T-cell (primary cell): ENCODE measurements at regions of chr17 and their contacts with region 1.

Region 1: GRCh38 chr17:77235370-77235941 is 94.7 kb downstream of the SEC14L1 start:
- DNase-seq: peak in 3 of 35 experiments; percentile 4 to 20 (median 18)
- ATAC-seq: peak in 3 of 4 experiments; percentile 32 to 43 (median 36)
- H3K4me3 ChIP-seq: peak overlapping the region; percentile 11 to 19
- H3K4me3 Mint-ChIP-seq: peak overlapping the region; percentile 63 to 71 (median 68)
- H3K27ac ChIP-seq: no peak overlapping the region
- H3K27ac Mint-ChIP-seq: peak overlapping the region in 1 of 2 donors; percentile 55
- H3K4me1 ChIP-seq: peaks cover 0 to 13% of the 10 kb centered on the region in 2 experiments
- H3K4me1 Mint-ChIP-seq: peaks cover 9 to 13% (median 10%) of the 10 kb centered on the region in 3 donors
- H3K27me3 ChIP-seq: peaks cover 0 to 4% of the 10 kb centered on the region in 2 experiments
- H3K27me3 Mint-ChIP-seq: no peaks in the 10 kb centered on the region

Region 2: DNA sequence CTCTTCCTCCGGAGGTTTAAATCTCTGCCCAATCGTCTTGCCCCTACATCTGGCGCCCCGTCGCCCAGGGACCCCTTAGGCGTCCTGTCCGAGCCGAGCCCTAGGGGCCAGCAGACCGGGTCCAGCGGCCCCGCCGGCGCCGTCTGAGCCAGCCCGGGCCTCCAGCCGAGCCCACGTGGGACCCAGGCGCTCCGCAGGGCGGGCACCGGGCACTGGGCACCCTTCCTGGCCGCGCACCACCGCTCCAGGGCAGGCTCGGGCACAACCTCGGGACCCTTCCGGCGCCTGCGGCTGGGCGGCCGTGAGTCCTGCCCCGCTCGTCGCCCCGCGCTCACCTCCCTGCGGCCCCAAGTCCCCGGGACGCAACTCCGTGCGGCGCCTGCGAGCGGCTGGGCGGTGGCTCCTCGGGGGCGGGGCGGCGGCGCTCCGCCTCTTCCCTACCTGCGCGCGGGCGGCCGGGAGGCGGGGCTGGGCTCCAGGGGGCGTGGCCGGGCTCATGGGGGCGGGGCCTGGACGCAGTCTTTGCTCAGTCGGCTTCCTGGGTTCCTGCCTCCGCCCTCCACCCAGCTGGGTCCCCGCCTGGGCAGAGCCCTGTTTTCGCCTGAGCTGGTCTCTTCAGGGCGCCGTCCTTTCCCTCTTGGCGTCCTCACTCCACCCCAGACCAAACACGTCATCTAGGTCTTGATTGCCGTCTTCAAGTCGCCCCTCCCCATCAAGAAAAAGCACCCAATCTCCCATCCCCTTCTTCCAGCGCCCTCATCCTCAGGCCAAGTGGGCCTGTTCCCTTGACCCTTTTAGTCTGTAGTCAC is 734.2 kb before region 1 on chr17 and contains the start of gene RHBDF2:
- CTCF ChIA-PET with region 1: no interaction called
- POLR2A ChIA-PET with region 1: no interaction called
- DNase-seq: peak; percentile 81 to 99 (median 94)
- ATAC-seq: peak; percentile 92 to 99 (median 93)
- H3K4me3 ChIP-seq: peak within 1 kb of the TSS; percentile 69 to 79
- H3K4me3 Mint-ChIP-seq: peak within 1 kb of the TSS; percentile 82 to 90 (median 83)
- H3K27ac ChIP-seq: peak within 1 kb of the TSS; percentile 79
- H3K27ac Mint-ChIP-seq: peak within 1 kb of the TSS; percentile 98
- H3K4me1 ChIP-seq: peaks cover 3 to 56% of the 10 kb centered on the region in 2 experiments
- H3K4me1 Mint-ChIP-seq: peaks cover 40 to 60% (median 48%) of the 10 kb centered on the region in 3 donors
- H3K27me3 ChIP-seq: peaks cover 0 to 6% of the 10 kb centered on the region in 2 experiments
- H3K27me3 Mint-ChIP-seq: no peaks in the 10 kb centered on the region
- total RNA-seq, gene RHBDF2: 35.2 to 99.0 (median 74.0) TPM

Region 3: DNA sequence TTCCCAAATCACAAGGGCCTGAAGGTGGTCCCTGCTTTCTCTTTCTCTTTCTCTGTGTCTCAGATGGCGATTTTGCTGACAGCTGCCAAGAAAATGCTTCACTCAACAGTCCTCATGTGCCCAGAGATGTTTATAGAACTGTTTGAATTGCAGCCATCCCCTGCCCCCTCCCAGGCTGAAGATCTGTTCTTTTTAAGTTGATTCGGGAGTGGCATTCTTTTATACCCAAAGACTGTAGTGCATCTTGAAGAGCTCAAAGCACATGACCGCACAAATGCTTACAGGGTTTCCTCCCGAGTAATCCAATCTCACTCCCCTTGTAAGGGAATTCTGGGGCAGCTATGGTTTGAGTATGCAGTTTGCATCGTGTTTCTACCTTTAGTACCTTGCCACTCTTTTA is 19.0 kb before region 1 on chr17:
- CTCF ChIA-PET with region 1: interaction called in 1 of 2 experiments, 13 read pairs
- POLR2A ChIA-PET with region 1: no interaction called
- DNase-seq: no peak
- ATAC-seq: no peak
- H3K4me3 ChIP-seq: no peak overlapping the region
- H3K4me3 Mint-ChIP-seq: no peak overlapping the region
- H3K27ac ChIP-seq: no peak overlapping the region
- H3K27ac Mint-ChIP-seq: peak overlapping the region; percentile 3 to 19
- H3K4me1 ChIP-seq: no peaks in the 10 kb centered on the region
- H3K4me1 Mint-ChIP-seq: peaks cover 0 to 4% (median 2%) of the 10 kb centered on the region in 3 donors
- H3K27me3 ChIP-seq: no peaks in the 10 kb centered on the region
- H3K27me3 Mint-ChIP-seq: no peaks in the 10 kb centered on the region